Panc1 (cell line): ENCODE measurements at regions of chr11 and their contacts with region 1.

Region 1: DNA sequence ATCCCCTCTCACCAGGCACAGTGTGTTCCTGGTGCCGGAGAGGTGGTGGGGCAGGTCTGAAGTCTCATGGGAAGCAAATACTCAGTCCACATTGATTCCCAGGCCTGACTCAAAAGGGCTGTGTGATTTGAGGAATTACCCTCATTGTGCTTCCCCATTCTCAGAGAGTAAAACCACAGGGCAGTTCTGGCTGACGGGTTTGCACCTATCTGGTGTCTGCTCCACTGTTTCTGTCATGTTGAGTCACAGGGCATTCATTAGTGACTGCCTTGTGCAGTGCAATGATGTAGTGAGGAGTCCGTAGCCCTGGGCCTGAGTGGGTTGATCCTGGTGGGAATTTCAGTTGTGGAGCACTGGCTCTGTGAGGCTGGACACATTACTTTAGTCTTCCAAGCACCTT is 85.2 kb upstream of the ARHGAP20 start:
- DNase-seq: no peak
- ATAC-seq: no peak
- H3K4me3 ChIP-seq: no peak overlapping the region
- H3K27ac ChIP-seq: no peak overlapping the region
- H3K4me1 ChIP-seq: no peaks in the 10 kb centered on the region; the same call in 1 of the 2 replicates
- H3K27me3 ChIP-seq: no peaks in the 10 kb centered on the region
- CTCF ChIP-seq: no peak

Region 2: GRCh38 chr11:110901441-110901840 is 104.0 kb after region 1 on chr11:
- CTCF ChIA-PET with region 1: interaction called, 14 read pairs
- POLR2A ChIA-PET with region 1: no interaction called
- in situ Hi-C with region 1: no loop called
- intact Hi-C with region 1: no loop called
- DNase-seq: no peak
- ATAC-seq: no peak
- H3K4me3 ChIP-seq: no peak overlapping the region
- H3K27ac ChIP-seq: no peak overlapping the region
- H3K4me1 ChIP-seq: no peaks in the 10 kb centered on the region
- H3K27me3 ChIP-seq: no peaks in the 10 kb centered on the region
- CTCF ChIP-seq: no peak